Activated CD4-positive, alpha-beta memory T cell treated with anti-CD3 and anti-CD28 coated beads for 36 hours (primary cell): ENCODE measurements at regions of chr6 and their contacts with region 1.

Region 1: DNA sequence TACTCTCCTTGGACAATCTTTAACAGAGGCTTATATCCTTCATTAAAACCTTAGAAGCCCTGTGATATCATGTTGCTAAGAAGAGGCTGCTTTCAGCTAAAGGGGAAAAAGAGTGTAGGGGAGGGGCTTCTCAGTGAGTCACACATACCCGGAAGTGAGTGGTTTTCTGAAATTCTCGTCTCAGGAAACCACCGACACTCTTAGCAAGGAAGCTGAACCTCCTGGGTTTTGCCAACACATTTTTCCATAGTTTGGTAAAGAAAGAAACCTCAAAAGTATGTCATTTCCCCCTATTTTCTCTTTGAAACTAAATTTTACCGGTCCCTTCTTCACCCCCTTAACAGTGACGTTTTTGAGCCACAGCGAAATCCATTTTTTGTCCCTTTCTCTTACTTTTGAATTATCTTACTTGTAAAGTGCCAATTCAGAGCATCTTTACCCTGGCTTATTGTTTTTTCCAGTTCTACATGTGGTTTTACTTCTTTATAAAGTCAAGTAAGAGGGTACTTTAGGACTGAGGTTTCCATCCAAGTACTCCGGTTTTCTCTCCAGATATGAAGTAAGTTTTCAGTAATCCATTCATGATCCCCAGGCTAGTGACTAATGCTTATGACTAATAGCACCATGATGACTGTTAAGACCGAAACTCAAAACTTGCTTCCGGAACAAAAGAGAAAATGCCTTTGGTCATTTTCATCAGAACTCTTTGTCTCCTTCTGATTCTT is 219.3 kb downstream of the ARHGAP18 start:
- DNase-seq: peak; percentile 78
- H3K4me3 Mint-ChIP-seq: peak overlapping the region; percentile 61
- H3K27ac Mint-ChIP-seq: peak overlapping the region; percentile 98
- H3K4me1 Mint-ChIP-seq: peaks cover 61% of the 10 kb centered on the region
- H3K27me3 Mint-ChIP-seq: no peaks in the 10 kb centered on the region

Region 2: GRCh38 chr6:128655978-128656498 is 834.6 kb before region 1 on chr6:
- CTCF ChIA-PET with region 1: no interaction called
- POLR2A ChIA-PET with region 1: no interaction called
- intact Hi-C with region 1: loop called (anchors 1 kb)
- DNase-seq: peak; percentile 16
- H3K4me3 Mint-ChIP-seq: no peak overlapping the region
- H3K27ac Mint-ChIP-seq: peak overlapping the region; percentile 74
- H3K4me1 Mint-ChIP-seq: peaks cover 31% of the 10 kb centered on the region
- H3K27me3 Mint-ChIP-seq: peaks cover 10% of the 10 kb centered on the region

Region 3: GRCh38 chr6:129402244-129402643 is 88.4 kb before region 1 on chr6:
- CTCF ChIA-PET with region 1: no interaction called
- POLR2A ChIA-PET with region 1: no interaction called
- intact Hi-C with region 1: no loop called
- DNase-seq: no peak
- H3K4me3 Mint-ChIP-seq: no peak overlapping the region
- H3K27ac Mint-ChIP-seq: no peak overlapping the region
- H3K4me1 Mint-ChIP-seq: no peaks in the 10 kb centered on the region
- H3K27me3 Mint-ChIP-seq: no peaks in the 10 kb centered on the region

Region 4: GRCh38 chr6:129448965-129449364 is 41.7 kb before region 1 on chr6:
- CTCF ChIA-PET with region 1: interaction called, 9 read pairs
- POLR2A ChIA-PET with region 1: no interaction called
- intact Hi-C with region 1: loop called (anchors 1 kb)
- DNase-seq: no peak
- H3K4me3 Mint-ChIP-seq: no peak overlapping the region
- H3K27ac Mint-ChIP-seq: no peak overlapping the region
- H3K4me1 Mint-ChIP-seq: peaks cover 51% of the 10 kb centered on the region
- H3K27me3 Mint-ChIP-seq: no peaks in the 10 kb centered on the region

Region 5: DNA sequence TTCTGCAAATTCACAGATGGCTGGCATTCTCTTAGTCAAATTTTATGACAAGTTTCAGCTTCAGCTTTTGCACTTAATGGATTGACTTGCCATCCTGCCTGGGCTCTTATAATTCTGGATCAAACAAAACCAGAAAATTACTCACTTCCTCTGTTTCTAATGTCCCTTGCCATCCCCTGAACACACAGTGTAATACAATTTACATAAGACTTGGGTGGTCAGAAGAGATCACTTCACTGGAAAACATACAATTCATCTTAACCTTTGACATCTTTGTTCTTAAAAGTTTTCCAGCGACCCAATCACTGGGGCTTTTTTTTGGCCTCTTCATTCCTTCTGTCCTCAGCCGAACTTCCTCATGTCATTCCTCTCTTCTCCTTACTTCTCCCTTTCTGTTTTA is 20.3 kb after region 1 on chr6:
- CTCF ChIA-PET with region 1: no interaction called
- POLR2A ChIA-PET with region 1: no interaction called
- intact Hi-C with region 1: no loop called
- DNase-seq: no peak
- H3K4me3 Mint-ChIP-seq: no peak overlapping the region
- H3K27ac Mint-ChIP-seq: no peak overlapping the region
- H3K4me1 Mint-ChIP-seq: peaks cover 2% of the 10 kb centered on the region
- H3K27me3 Mint-ChIP-seq: no peaks in the 10 kb centered on the region

Region 6: GRCh38 chr6:129683601-129684322 is 193.1 kb after region 1 on chr6:
- CTCF ChIA-PET with region 1: no interaction called
- POLR2A ChIA-PET with region 1: no interaction called
- intact Hi-C with region 1: loop called (anchors 1 kb)
- DNase-seq: peak; percentile 81
- H3K4me3 Mint-ChIP-seq: peak overlapping the region; percentile 30
- H3K27ac Mint-ChIP-seq: peak overlapping the region; percentile 76
- H3K4me1 Mint-ChIP-seq: peaks cover 44% of the 10 kb centered on the region
- H3K27me3 Mint-ChIP-seq: no peaks in the 10 kb centered on the region

Region 7: DNA sequence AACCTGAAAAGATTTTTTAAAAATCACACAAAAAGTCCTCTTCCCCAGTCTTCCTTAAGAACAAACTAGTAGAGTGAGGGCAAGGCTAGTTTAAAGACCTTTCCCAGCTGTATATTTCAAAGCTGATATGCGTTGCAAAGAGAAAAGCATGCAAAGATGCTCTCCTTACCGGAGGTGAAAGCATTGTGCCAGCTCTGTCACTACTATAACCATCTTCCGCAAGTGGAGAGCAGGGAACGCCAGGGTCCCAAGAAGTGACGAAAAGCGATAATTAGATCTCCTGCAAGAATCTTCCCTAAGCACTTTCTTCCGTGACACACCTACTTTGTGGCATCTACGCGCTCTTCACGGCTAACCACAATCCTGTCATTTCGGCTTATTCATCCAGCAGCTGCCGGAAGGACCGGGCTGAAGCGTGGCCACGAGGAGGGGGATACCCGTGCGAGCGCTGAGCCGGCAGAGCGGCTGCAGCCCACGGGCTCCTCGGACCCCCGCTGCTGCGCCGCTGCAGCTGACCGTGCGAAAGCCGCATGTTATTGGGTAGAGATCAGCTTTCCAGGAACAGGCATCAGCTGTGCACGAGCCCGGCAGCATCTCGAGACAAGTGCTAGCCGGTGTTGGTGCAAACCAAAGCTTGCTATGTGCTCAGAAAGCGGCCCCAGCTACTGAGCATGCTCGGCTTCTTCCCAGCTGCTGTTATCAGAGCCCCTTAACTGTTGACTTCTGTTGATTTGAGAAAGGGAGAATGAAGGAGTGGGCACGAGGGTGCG is 276.5 kb after region 1 on chr6:
- CTCF ChIA-PET with region 1: no interaction called
- POLR2A ChIA-PET with region 1: no interaction called
- intact Hi-C with region 1: loop called (anchors 1 kb)
- DNase-seq: peak; percentile 84
- H3K4me3 Mint-ChIP-seq: peak overlapping the region; percentile 71
- H3K27ac Mint-ChIP-seq: no peak overlapping the region
- H3K4me1 Mint-ChIP-seq: peaks cover 14% of the 10 kb centered on the region
- H3K27me3 Mint-ChIP-seq: peaks cover 15% of the 10 kb centered on the region

Region 8: GRCh38 chr6:130020907-130021629 is 530.4 kb after region 1 on chr6:
- CTCF ChIA-PET with region 1: no interaction called
- POLR2A ChIA-PET with region 1: no interaction called
- intact Hi-C with region 1: loop called (anchors 2 kb)
- DNase-seq: peak; percentile 87
- H3K4me3 Mint-ChIP-seq: peak overlapping the region; percentile 95
- H3K27ac Mint-ChIP-seq: peak overlapping the region; percentile 89
- H3K4me1 Mint-ChIP-seq: peaks cover 22% of the 10 kb centered on the region
- H3K27me3 Mint-ChIP-seq: no peaks in the 10 kb centered on the region

Region 9: GRCh38 chr6:130132286-130132701 is 641.6 kb after region 1 on chr6:
- CTCF ChIA-PET with region 1: no interaction called
- POLR2A ChIA-PET with region 1: no interaction called
- intact Hi-C with region 1: loop called (anchors 2 kb)
- DNase-seq: peak; percentile 79
- H3K4me3 Mint-ChIP-seq: peak overlapping the region; percentile 54
- H3K27ac Mint-ChIP-seq: peak overlapping the region; percentile 86
- H3K4me1 Mint-ChIP-seq: peaks cover 63% of the 10 kb centered on the region
- H3K27me3 Mint-ChIP-seq: no peaks in the 10 kb centered on the region